ENCODE measurements at regions of chr11 and their contacts with region 1.

Region 1: DNA sequence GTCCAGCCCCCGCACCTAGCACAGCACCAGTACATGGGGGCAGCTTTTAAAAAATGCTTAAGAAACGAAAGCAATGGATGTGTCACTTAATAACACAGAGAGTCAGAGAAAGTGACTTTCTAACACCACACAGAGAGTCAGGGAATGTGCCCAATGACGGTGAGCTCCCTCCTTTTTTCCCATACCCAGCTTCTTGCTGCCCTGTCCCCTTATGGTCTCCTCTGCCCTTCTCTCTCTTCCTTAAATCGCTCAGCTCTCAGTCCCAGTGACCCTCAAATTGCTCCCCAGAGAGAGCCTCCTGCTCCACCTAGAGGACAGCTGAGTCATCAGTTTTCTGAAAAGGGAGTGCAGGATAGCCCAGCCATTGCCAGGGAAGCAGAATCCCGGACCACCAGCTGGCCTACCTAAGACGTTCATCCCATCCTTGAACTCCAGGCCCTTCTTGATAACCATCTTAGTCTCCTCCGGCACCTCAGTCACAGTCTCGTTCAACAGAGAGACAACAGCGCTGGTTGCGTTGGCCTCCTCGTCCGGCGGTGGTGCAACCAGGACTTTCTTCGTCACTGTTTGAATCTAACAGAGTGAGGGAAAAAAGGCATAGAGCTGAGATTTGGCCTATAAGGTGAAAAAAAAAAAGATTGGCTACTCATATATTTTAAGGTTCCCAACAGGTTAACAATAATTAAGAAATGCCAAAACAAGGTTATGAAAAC is 113.5 kb downstream of the SLC1A2 start:
- DNase-seq: peak; percentile 75
- H3K4me3 Mint-ChIP-seq: no peak overlapping the region
- H3K27ac Mint-ChIP-seq: peak overlapping the region; percentile 48
- H3K4me1 Mint-ChIP-seq: peaks cover 24% of the 10 kb centered on the region
- H3K27me3 Mint-ChIP-seq: no peaks in the 10 kb centered on the region

Region 2: GRCh38 chr11:35288817-35289541 is 16.8 kb before region 1 on chr11:
- intact Hi-C with region 1: no loop called
- DNase-seq: no peak
- H3K4me3 Mint-ChIP-seq: peak overlapping the region; percentile 19
- H3K27ac Mint-ChIP-seq: peak overlapping the region; percentile 70
- H3K4me1 Mint-ChIP-seq: peaks cover 29% of the 10 kb centered on the region
- H3K27me3 Mint-ChIP-seq: no peaks in the 10 kb centered on the region

Region 3: DNA sequence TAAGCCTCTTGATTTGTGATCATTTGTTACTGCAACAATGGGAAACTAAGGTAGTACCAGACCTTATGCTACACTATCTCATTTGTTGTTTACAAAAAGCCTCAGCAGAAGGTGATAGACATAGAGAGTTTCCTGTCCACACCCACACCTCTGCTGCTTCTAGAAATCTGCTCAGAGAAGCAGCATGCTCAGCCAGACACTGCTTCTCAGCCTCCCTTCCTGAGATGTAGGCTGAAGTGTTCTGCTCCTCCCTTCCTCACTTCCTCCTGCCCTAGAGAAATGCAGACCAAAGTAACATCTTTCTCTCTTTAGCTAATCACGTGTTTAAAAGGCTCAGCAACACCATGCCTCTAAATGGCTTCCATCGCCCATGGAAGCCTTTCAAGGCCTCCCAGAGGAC is 25.1 kb after region 1 on chr11:
- intact Hi-C with region 1: loop called (anchors 2 kb)
- DNase-seq: peak; percentile 87
- H3K4me3 Mint-ChIP-seq: peak overlapping the region; percentile 10
- H3K27ac Mint-ChIP-seq: peak overlapping the region; percentile 72
- H3K4me1 Mint-ChIP-seq: peaks cover 41% of the 10 kb centered on the region
- H3K27me3 Mint-ChIP-seq: no peaks in the 10 kb centered on the region

Region 4: DNA sequence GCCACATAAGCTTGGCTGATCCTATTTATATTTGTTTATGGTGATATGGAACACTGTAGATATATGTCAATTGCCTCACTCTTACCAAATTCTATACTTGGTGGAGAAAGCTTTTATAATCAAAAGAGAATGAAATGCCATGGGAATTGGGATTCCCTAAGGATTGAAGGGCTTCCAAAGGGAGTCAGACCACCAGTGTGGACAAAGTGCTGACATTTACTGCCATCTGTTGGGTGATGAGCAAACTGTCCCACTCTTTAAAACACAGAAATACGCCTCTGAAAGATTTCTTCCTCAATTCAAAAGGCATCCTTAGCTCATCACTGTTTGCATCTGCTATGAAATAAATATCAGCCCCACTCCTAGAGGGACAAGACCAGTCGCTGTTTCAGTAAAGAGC is 106.5 kb after region 1 on chr11:
- intact Hi-C with region 1: no loop called
- DNase-seq: no peak
- H3K4me3 Mint-ChIP-seq: no peak overlapping the region
- H3K27ac Mint-ChIP-seq: no peak overlapping the region
- H3K4me1 Mint-ChIP-seq: no peaks in the 10 kb centered on the region
- H3K27me3 Mint-ChIP-seq: peaks cover 56% of the 10 kb centered on the region

Region 5: GRCh38 chr11:35485656-35486322 is 180.0 kb after region 1 on chr11:
- intact Hi-C with region 1: no loop called
- DNase-seq: peak; percentile 90
- H3K4me3 Mint-ChIP-seq: no peak overlapping the region
- H3K27ac Mint-ChIP-seq: no peak overlapping the region
- H3K4me1 Mint-ChIP-seq: no peaks in the 10 kb centered on the region
- H3K27me3 Mint-ChIP-seq: peaks cover 30% of the 10 kb centered on the region